GM23248 (cell line): ENCODE measurements at regions of chr12 and their contacts with region 1.

Region 1: DNA sequence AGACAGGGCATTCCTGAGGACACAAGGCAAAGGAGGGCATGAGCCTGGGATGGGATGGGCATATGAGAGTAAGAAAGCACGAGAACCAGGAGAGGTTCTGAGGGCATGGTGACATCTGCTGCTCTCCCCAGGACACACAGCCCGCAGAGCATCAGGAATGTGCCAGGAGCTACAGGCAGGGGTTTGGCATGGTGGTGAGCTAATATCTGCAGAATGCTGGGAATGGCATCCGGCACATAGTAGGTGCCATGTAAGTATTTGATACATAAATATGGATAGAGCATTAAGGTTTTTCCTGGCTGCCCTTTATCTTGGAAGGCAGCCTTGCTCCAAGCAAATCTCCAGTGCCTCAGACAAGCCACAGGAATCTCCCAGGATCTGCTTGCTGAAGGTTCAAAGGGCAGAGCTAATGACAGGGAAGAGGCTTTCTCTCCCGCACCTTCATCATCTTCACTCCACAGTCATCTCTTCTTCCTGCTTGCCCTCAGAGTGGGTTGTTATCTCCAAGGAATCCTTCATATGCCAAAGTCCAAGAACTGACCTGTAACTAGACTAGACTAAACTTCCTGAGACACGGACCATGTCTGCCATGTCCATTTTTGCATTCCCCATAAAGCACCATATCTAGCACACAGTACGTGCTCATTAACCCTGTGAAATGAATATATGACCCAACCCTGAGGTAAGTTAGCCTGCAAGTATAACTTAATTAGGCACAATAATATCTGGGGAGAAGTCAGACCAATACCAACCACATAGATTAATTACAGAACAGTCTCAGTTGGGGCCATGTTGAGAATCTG is 62.0 kb upstream of the SCN8A start:
- DNase-seq: no peak
- H3K4me3 ChIP-seq: no peak overlapping the region
- H3K27ac ChIP-seq: no peak overlapping the region
- H3K4me1 ChIP-seq: peaks cover 21% of the 10 kb centered on the region
- H3K27me3 ChIP-seq: no peaks in the 10 kb centered on the region

Region 2: GRCh38 chr12:51405801-51406207 is 123.2 kb before region 1 on chr12:
- in situ Hi-C with region 1: no loop called
- DNase-seq: no peak
- H3K4me3 ChIP-seq: no peak overlapping the region
- H3K27ac ChIP-seq: no peak overlapping the region
- H3K4me1 ChIP-seq: no peaks in the 10 kb centered on the region
- H3K27me3 ChIP-seq: no peaks in the 10 kb centered on the region

Region 3: GRCh38 chr12:51430231-51430906 is 98.7 kb before region 1 on chr12:
- in situ Hi-C with region 1: loop called (anchors 5 kb)
- DNase-seq: no peak
- H3K4me3 ChIP-seq: no peak overlapping the region
- H3K27ac ChIP-seq: no peak overlapping the region
- H3K4me1 ChIP-seq: no peaks in the 10 kb centered on the region
- H3K27me3 ChIP-seq: no peaks in the 10 kb centered on the region

Region 4: GRCh38 chr12:51449577-51450246 is 79.3 kb before region 1 on chr12:
- in situ Hi-C with region 1: no loop called
- DNase-seq: peak; percentile 37
- H3K4me3 ChIP-seq: no peak overlapping the region
- H3K27ac ChIP-seq: no peak overlapping the region
- H3K4me1 ChIP-seq: no peaks in the 10 kb centered on the region
- H3K27me3 ChIP-seq: no peaks in the 10 kb centered on the region